PC-9 (cell line): ENCODE measurements at regions of chr1 and their contacts with region 1.

Region 1: DNA sequence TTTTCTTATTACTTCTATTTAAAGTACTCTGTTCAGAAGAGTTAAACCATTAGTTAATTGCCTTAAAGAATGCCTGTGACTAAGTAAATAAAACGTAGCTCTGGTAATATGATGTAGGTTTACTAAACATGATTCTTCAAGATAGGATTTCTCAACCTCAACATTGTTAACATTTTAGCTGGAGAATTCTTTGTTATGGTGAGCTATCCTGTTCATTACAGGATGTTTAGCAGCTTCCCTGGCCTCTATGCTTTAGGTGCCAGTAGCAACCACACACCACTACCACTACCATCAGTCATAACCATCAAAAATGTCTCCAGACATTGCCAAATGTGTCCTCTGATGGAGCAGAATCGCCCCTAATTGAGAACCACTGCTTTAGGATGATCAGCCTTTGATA is 10.7 kb downstream of the RPF1 start:
- DNase-seq: no peak
- H3K4me3 ChIP-seq: no peak overlapping the region
- H3K27ac ChIP-seq: no peak overlapping the region
- H3K4me1 ChIP-seq: no peaks in the 10 kb centered on the region
- H3K27me3 ChIP-seq: no peaks in the 10 kb centered on the region
- CTCF ChIP-seq: no peak

Region 2: DNA sequence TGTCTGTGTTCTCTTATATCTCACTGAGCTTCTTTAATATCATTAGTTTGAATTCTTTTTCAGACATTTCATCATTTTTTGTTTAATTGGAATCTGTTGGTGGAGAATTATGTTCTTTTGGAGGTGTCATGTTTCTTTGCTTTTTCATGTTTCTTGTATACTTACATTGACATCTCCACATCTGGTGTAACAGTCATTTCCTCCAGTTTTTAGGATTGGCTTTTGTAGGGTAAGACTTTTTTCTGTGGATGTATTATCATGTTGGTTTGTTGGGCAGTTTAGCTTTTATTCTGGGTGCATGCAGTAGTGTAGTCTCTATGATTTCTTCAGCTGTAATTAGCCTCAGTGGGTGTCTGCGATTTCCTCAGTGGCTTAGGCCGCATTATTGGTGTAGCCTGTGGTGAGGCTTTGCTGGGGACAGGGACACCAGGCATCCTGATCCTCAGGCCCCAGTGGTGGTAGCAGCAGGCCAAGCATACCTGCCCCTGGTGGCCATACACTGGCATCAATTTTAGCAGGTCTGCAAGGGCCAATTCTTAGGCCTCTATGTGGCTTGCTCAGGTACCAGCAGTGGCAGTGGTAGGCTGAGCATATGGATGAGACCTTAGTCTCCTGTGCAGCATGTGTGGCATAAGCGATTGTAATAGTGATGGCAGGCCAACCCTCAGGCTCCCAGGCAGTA is 265.9 kb before region 1 on chr1:
- CTCF ChIA-PET with region 1: no interaction called
- POLR2A ChIA-PET with region 1: interaction called, 18 read pairs
- intact Hi-C with region 1: no loop called
- DNase-seq: no peak
- H3K4me3 ChIP-seq: no peak overlapping the region
- H3K27ac ChIP-seq: no peak overlapping the region
- H3K4me1 ChIP-seq: no peaks in the 10 kb centered on the region
- H3K27me3 ChIP-seq: no peaks in the 10 kb centered on the region
- CTCF ChIP-seq: no peak